ENCODE measurements at regions of chr20 and their contacts with region 1.

Region 1: DNA sequence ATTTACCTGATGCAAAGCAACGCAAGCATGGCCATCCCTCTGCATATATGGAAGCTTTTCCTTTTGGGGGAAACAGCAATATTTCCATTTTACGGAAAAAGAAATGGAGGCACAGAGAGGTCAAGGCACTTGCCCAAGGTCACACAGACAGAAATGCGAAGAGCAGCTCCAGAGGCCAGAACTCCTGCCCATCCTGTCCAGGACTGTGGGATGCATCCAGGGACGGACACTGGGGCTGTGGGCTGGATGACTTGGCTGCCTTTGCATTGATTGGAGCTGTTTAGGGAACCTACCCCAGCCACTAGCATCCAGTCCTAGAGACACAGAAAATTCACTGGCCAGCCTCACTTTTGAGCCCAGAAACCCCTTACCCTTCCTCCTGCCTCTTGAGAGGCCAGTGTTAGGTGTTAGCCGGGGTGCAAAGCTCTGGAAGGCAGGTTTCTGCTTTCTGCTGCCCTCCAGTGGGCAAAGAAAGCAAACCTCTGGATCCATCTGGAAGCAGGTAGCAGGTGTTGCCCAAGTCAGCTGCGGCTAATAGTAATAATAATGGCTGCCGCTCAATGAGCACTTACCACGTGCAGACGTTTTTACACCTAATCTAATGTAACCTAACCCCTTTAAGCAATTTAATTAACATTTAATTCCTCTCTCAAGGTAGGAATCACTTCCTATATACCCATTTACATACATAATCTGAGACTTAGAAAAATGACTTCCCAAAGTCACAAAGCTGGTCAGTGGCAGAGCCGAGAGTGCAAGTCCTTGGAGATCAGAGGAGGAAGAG is 31.7 kb upstream of the CCN5 start:
- DNase-seq: peak; percentile 58
- H3K4me3 Mint-ChIP-seq: no peak overlapping the region
- H3K27ac Mint-ChIP-seq: no peak overlapping the region
- H3K4me1 Mint-ChIP-seq: peaks cover 5% of the 10 kb centered on the region
- H3K27me3 Mint-ChIP-seq: peaks cover 5% of the 10 kb centered on the region

Region 2: DNA sequence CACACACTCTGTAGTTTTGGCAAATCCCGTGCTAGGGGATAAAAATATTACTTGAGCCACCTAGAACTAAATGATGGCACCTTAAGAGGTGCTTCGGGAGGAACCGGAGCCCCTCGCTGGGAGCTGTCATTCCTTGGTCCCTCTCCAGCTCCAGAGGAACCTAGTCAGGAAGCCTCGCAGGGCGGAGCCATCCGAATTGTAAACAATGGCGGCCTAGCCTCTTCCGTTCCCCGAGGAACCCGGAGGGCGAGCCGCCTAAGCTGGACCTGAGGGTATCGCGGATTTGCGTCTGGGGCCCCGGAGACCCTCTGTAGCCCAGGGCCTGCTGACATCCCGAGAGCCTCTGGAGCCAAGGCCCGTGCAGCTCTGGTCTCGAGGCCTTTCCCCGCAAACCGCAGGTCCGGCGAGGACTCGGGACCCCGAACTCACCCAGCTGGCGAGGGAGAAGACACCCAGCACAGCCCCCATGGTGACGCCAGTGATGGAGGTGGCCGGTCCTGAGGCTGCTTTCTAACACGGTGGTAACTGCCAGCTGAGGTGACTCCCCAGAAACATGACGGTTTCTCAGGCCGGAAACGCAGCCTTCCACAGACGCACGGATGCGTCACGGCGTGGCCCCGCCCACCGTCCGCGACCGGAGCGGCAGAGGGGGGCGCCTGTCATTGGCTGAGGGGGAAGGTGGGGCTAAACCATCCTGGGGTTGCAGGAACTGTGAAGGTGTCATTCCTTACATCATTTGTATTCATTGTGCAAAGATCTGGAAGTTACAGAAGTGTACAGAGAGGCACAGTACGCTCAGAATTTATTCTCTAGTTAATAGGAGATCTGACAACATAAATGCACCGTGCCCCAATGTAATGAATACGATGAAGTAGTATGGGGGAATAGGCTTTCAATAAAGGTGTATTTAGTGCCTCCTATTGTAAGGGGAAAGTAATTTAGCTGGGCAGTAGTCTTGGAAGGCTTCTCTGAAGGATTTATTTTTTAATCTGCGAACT is 161.7 kb before region 1 on chr20 and contains the start of gene SERINC3:
- CTCF ChIA-PET with region 1: no interaction called
- POLR2A ChIA-PET with region 1: no interaction called
- intact Hi-C with region 1: no loop called
- DNase-seq: peak; percentile 98
- H3K4me3 Mint-ChIP-seq: peak within 1 kb of the TSS; percentile 83
- H3K27ac Mint-ChIP-seq: peak within 1 kb of the TSS; percentile 88
- H3K4me1 Mint-ChIP-seq: peaks cover 53% of the 10 kb centered on the region
- H3K27me3 Mint-ChIP-seq: no peaks in the 10 kb centered on the region
- total RNA-seq, gene SERINC3: 57.3 to 58.6 TPM

Region 3: GRCh38 chr20:44642203-44643153 is 41.0 kb before region 1 on chr20:
- CTCF ChIA-PET with region 1: interaction called, 10 read pairs
- POLR2A ChIA-PET with region 1: no interaction called
- intact Hi-C with region 1: no loop called
- DNase-seq: peak; percentile 54
- H3K4me3 Mint-ChIP-seq: peak overlapping the region; percentile 39
- H3K27ac Mint-ChIP-seq: peak overlapping the region; percentile 76
- H3K4me1 Mint-ChIP-seq: peaks cover 55% of the 10 kb centered on the region
- H3K27me3 Mint-ChIP-seq: no peaks in the 10 kb centered on the region

Region 4: GRCh38 chr20:44651684-44652423 is 31.6 kb before region 1 on chr20 and contains the start of gene ADA:
- CTCF ChIA-PET with region 1: interaction called, 20 read pairs
- POLR2A ChIA-PET with region 1: interaction called, 4 read pairs
- intact Hi-C with region 1: no loop called
- DNase-seq: peak; percentile 53
- H3K4me3 Mint-ChIP-seq: peak within 1 kb of the TSS; percentile 85
- H3K27ac Mint-ChIP-seq: peak within 1 kb of the TSS; percentile 79
- H3K4me1 Mint-ChIP-seq: peaks cover 40% of the 10 kb centered on the region
- H3K27me3 Mint-ChIP-seq: no peaks in the 10 kb centered on the region
- total RNA-seq, gene ADA: 35.7 to 38.0 TPM

Region 5: GRCh38 chr20:44733341-44734069 is 50.0 kb after region 1 on chr20:
- CTCF ChIA-PET with region 1: interaction called, 92 read pairs
- POLR2A ChIA-PET with region 1: no interaction called
- intact Hi-C with region 1: loop called (anchors 1 kb)
- DNase-seq: peak; percentile 76
- H3K4me3 Mint-ChIP-seq: no peak overlapping the region
- H3K27ac Mint-ChIP-seq: no peak overlapping the region
- H3K4me1 Mint-ChIP-seq: peaks cover 23% of the 10 kb centered on the region
- H3K27me3 Mint-ChIP-seq: no peaks in the 10 kb centered on the region

Region 6: GRCh38 chr20:44747166-44748004 is 63.9 kb after region 1 on chr20:
- CTCF ChIA-PET with region 1: interaction called, 44 read pairs
- POLR2A ChIA-PET with region 1: no interaction called
- intact Hi-C with region 1: loop called (anchors 1 kb)
- DNase-seq: peak; percentile 81
- H3K4me3 Mint-ChIP-seq: peak overlapping the region; percentile 67
- H3K27ac Mint-ChIP-seq: no peak overlapping the region
- H3K4me1 Mint-ChIP-seq: peaks cover 11% of the 10 kb centered on the region
- H3K27me3 Mint-ChIP-seq: peaks cover 18% of the 10 kb centered on the region

Region 7: GRCh38 chr20:44866703-44867335 is 183.4 kb after region 1 on chr20:
- CTCF ChIA-PET with region 1: interaction called, 38 read pairs
- POLR2A ChIA-PET with region 1: no interaction called
- intact Hi-C with region 1: loop called (anchors 1 kb)
- DNase-seq: no peak
- H3K4me3 Mint-ChIP-seq: peak overlapping the region; percentile 39
- H3K27ac Mint-ChIP-seq: no peak overlapping the region
- H3K4me1 Mint-ChIP-seq: peaks cover 11% of the 10 kb centered on the region
- H3K27me3 Mint-ChIP-seq: peaks cover 3% of the 10 kb centered on the region